CD4-positive, alpha-beta T cell (primary cell): ENCODE measurements at regions of chr16 and their contacts with region 1.

Region 1: DNA sequence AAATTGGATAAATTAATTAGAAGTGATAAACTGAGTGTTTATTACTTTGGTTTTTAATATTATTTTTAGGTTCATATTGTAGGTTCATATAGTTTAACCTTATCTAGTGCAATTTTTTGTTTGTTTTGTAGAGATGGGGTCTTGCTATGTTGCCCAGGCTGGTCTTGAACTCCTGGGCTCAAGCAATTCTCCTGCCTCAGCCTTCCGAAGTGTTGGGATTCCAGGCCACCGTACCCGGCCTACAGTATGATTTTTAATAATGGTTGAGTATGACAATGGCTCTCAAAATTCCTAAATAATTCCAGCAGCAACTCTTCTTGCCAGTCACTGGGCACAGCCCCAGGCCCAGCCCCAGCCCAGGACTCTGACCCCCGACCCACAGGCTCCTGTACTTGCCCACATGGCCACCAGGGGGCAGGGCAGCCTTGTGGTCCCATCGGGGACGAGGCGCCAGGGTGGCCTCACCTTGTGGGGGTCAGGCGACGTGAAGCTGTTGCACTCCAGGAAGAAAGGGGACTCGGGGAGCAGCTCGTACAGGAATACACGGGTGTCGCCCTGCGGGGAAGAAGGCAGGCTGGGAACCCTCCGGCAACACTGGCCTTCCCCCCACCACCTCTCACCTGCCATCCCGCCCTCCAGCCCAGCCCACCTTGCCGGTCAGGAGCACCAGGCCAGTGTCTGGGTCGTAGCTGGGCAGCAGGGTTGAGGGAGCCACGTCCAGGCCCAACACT is 7.9 kb upstream of the PAM16 start:
- DNase-seq: peak; percentile 53 to 79 (median 60)
- ATAC-seq: peak; percentile 67
- H3K4me3 ChIP-seq: no peak overlapping the region
- H3K4me3 Mint-ChIP-seq: no peak overlapping the region
- H3K27ac ChIP-seq: no peak overlapping the region
- H3K27ac Mint-ChIP-seq: peak overlapping the region; percentile 48
- H3K4me1 ChIP-seq: no peaks in the 10 kb centered on the region
- H3K4me1 Mint-ChIP-seq: no peaks in the 10 kb centered on the region
- H3K27me3 ChIP-seq: no peaks in the 10 kb centered on the region
- H3K27me3 Mint-ChIP-seq: no peaks in the 10 kb centered on the region
- CTCF ChIP-seq: peak; percentile 90

Region 2: DNA sequence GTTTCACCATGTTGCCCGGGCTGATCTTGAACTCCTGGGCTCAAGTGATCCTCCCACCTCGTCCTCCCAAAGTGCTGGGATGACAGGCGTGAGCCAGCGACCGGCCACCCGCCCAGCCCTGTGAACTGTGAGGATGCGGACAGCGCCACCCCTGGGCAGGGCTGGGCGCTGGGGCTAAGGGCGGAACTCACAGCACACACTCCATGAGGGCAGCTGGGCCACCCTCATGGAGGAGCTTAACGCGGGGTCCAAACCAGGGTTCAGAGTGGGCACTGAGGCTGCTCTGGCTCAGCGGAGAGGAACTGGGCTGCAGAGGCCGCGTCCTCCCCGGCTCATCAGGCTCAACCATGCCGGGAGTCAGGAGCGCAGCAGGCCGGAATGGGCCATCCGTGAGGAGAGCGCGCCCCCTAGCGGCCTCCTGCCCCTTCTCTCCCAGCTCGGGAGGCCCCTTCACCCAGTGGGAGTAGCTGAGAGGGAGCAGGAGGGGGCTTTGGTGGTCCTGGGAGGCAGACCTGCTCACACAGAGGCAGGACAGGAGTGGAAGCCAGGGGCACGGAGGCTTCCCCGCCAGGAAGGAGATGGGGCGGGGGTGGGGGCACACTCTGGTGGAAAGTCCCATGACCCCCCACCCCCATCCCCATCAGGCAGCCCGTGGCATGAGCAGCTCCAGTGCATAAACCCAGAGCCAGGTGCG is 43.6 kb after region 1 on chr16:
- CTCF ChIA-PET with region 1: interaction called, 4 read pairs
- POLR2A ChIA-PET with region 1: no interaction called
- intact Hi-C with region 1: loop called in 1 of 2 experiments (anchors 1 kb)
- DNase-seq: peak in 13 of 14 experiments; percentile 47 to 78 (median 64)
- ATAC-seq: peak; percentile 39
- H3K4me3 ChIP-seq: no peak overlapping the region
- H3K4me3 Mint-ChIP-seq: peak overlapping the region; percentile 20
- H3K27ac ChIP-seq: no peak overlapping the region
- H3K27ac Mint-ChIP-seq: peak overlapping the region; percentile 84
- H3K4me1 ChIP-seq: peaks cover 23% of the 10 kb centered on the region
- H3K4me1 Mint-ChIP-seq: peaks cover 22% of the 10 kb centered on the region
- H3K27me3 ChIP-seq: no peaks in the 10 kb centered on the region
- H3K27me3 Mint-ChIP-seq: no peaks in the 10 kb centered on the region
- CTCF ChIP-seq: peak; percentile 77

Region 3: GRCh38 chr16:4461250-4462085 is 102.5 kb after region 1 on chr16:
- CTCF ChIA-PET with region 1: no interaction called
- POLR2A ChIA-PET with region 1: no interaction called
- intact Hi-C with region 1: loop called in 1 of 2 experiments (anchors 1 kb)
- DNase-seq: no peak
- ATAC-seq: no peak
- H3K4me3 ChIP-seq: no peak overlapping the region
- H3K4me3 Mint-ChIP-seq: no peak overlapping the region
- H3K27ac ChIP-seq: no peak overlapping the region
- H3K27ac Mint-ChIP-seq: peak overlapping the region; percentile 51
- H3K4me1 ChIP-seq: peaks cover 32% of the 10 kb centered on the region
- H3K4me1 Mint-ChIP-seq: peaks cover 20% of the 10 kb centered on the region
- H3K27me3 ChIP-seq: no peaks in the 10 kb centered on the region
- H3K27me3 Mint-ChIP-seq: no peaks in the 10 kb centered on the region
- CTCF ChIP-seq: no peak

Region 4: GRCh38 chr16:4550591-4550990 is 191.6 kb after region 1 on chr16:
- CTCF ChIA-PET with region 1: interaction called, 3 read pairs
- POLR2A ChIA-PET with region 1: no interaction called
- intact Hi-C with region 1: loop called in 1 of 2 experiments (anchors 1 kb)
- DNase-seq: no peak
- ATAC-seq: no peak
- H3K4me3 ChIP-seq: no peak overlapping the region
- H3K4me3 Mint-ChIP-seq: no peak overlapping the region
- H3K27ac ChIP-seq: no peak overlapping the region
- H3K27ac Mint-ChIP-seq: no peak overlapping the region
- H3K4me1 ChIP-seq: peaks cover 10% of the 10 kb centered on the region
- H3K4me1 Mint-ChIP-seq: peaks cover 5% of the 10 kb centered on the region
- H3K27me3 ChIP-seq: no peaks in the 10 kb centered on the region
- H3K27me3 Mint-ChIP-seq: no peaks in the 10 kb centered on the region
- CTCF ChIP-seq: no peak

Region 5: DNA sequence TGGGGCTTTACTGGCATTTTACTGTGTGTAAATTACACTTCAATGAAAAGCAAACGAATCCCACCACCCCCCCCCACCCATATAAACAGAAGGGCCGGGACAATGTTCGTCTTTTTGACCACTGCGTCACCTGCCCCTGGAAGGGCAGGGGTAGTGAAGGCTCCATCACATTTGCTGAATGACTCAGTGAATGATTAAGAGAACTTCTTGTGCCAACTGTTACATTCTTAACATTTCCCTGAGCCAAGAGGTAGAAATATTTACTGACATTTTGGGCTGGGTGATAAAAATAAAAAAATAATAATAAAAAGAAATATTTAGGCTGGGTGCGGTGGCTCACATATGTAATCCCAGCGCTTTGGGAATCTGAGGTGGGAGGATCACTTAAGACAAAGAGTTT is 221.2 kb after region 1 on chr16:
- CTCF ChIA-PET with region 1: no interaction called
- POLR2A ChIA-PET with region 1: no interaction called
- intact Hi-C with region 1: loop called in 1 of 2 experiments (anchors 1 kb)
- DNase-seq: no peak
- ATAC-seq: no peak
- H3K4me3 ChIP-seq: no peak overlapping the region
- H3K4me3 Mint-ChIP-seq: no peak overlapping the region
- H3K27ac ChIP-seq: no peak overlapping the region
- H3K27ac Mint-ChIP-seq: no peak overlapping the region
- H3K4me1 ChIP-seq: peaks cover 1% of the 10 kb centered on the region
- H3K4me1 Mint-ChIP-seq: no peaks in the 10 kb centered on the region
- H3K27me3 ChIP-seq: no peaks in the 10 kb centered on the region
- H3K27me3 Mint-ChIP-seq: no peaks in the 10 kb centered on the region
- CTCF ChIP-seq: no peak

Region 6: GRCh38 chr16:4957720-4958509 is 598.9 kb after region 1 on chr16 and contains the start of gene SEC14L5:
- CTCF ChIA-PET with region 1: no interaction called
- POLR2A ChIA-PET with region 1: no interaction called
- intact Hi-C with region 1: loop called in 1 of 2 experiments (anchors 1 kb)
- DNase-seq: peak; percentile 79 to 95 (median 89)
- ATAC-seq: peak; percentile 93
- H3K4me3 ChIP-seq: peak within 1 kb of the TSS; percentile 52
- H3K4me3 Mint-ChIP-seq: peak within 1 kb of the TSS; percentile 86
- H3K27ac ChIP-seq: no peak within 1 kb of the TSS
- H3K27ac Mint-ChIP-seq: no peak within 1 kb of the TSS
- H3K4me1 ChIP-seq: peaks cover 26% of the 10 kb centered on the region
- H3K4me1 Mint-ChIP-seq: peaks cover 24% of the 10 kb centered on the region
- H3K27me3 ChIP-seq: peaks cover 13 to 16% of the 10 kb centered on the region in 2 experiments
- H3K27me3 Mint-ChIP-seq: peaks cover 53% of the 10 kb centered on the region
- CTCF ChIP-seq: no peak
- total RNA-seq, gene SEC14L5: not detected